ENCODE measurements at regions of chr10 and their contacts with region 1.

Region 1: GRCh38 chr10:120508393-120508792 is 51.4 kb downstream of the PLPP4 start:
- DNase-seq: peak; percentile 98
- H3K4me3 ChIP-seq: no peak overlapping the region
- H3K27ac ChIP-seq: peak overlapping the region; percentile 89
- H3K4me1 ChIP-seq: peaks cover 75% of the 10 kb centered on the region
- H3K27me3 ChIP-seq: no peaks in the 10 kb centered on the region
- CTCF ChIP-seq: no peak

Region 2: DNA sequence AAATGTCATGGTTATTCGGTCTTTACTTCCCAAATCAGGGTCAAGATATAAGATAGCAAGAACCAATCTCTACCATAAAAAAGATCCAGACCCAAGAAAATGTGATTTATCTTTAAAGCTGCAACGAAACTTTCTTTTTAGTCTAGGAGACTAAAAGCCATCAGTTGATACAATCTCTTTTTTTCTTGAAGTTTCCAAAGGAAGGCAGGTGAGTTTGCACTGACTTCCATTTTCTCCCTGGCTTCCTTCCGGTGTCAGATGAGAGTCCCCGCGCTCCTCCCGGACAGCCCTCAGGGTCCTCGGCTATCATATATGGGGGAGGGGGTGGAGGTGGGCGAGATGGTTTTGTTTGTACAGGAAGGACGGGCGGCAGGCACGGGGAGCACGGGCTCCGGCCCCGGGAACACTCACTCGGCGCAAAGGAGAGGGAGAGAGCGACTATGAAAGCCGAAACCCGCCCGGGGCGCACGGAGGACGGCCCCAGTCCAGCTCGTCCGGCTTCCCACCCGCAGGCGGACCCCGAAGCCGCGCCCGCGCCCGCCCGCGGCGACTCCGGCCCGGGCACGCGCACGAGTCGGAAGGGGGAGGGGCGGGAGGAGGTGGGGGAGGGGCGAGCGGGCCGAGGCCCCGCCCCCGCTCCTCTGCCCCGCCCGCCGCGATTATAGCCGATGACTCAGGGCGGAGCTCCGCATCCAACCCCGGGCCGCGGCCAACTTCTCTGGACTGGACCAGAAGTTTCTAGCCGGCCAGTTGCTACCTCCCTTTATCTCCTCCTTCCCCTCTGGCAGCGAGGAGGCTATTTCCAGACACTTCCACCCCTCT is 857.5 kb before region 1 on chr10 and contains the start of gene BAG3:
- CTCF ChIA-PET with region 1: no interaction called
- dilution Hi-C with region 1: no loop called
- in situ Hi-C with region 1: no loop called
- intact Hi-C with region 1: loop called (anchors 10 kb)
- DNase-seq: peak; percentile 92
- H3K4me3 ChIP-seq: peak within 1 kb of the TSS; percentile 95 to 97 (median 96)
- H3K27ac ChIP-seq: peak within 1 kb of the TSS; percentile 77
- H3K4me1 ChIP-seq: peaks cover 24% of the 10 kb centered on the region
- H3K27me3 ChIP-seq: no peaks in the 10 kb centered on the region
- CTCF ChIP-seq: no peak
- total RNA-seq, gene BAG3: 41.0 to 117 TPM

Region 3: GRCh38 chr10:119761106-119761505 is 747.3 kb before region 1 on chr10:
- CTCF ChIA-PET with region 1: no interaction called
- dilution Hi-C with region 1: no loop called
- in situ Hi-C with region 1: no loop called
- intact Hi-C with region 1: loop called (anchors 10 kb)
- DNase-seq: peak; percentile 81
- H3K4me3 ChIP-seq: peak overlapping the region in 1 of 3 experiments; percentile 9
- H3K27ac ChIP-seq: peak overlapping the region; percentile 26
- H3K4me1 ChIP-seq: peaks cover 13% of the 10 kb centered on the region
- H3K27me3 ChIP-seq: no peaks in the 10 kb centered on the region
- CTCF ChIP-seq: no peak

Region 4: DNA sequence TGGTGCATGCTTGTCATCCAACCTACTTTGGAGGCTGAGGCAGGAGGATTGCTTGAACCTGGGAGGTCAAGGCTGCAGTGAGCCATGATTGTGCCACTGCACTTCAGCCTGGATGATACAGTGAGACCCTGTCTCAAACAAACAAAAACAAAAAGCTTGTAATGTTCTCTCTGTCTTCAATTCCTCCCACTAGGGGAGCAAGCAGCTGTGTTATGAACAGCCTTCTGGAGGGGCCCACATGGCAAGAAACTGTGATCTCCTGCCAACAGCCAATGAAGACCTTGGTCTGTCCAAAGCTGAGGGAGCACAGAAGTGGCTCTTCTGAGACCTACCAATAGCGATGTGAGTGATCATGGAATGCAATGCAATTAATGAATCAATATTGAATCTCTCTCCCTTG is 386.6 kb before region 1 on chr10:
- CTCF ChIA-PET with region 1: no interaction called
- dilution Hi-C with region 1: no loop called
- in situ Hi-C with region 1: no loop called
- intact Hi-C with region 1: no loop called
- DNase-seq: no peak
- H3K4me3 ChIP-seq: no peak overlapping the region
- H3K27ac ChIP-seq: no peak overlapping the region
- H3K4me1 ChIP-seq: no peaks in the 10 kb centered on the region
- H3K27me3 ChIP-seq: peaks cover 5% of the 10 kb centered on the region
- CTCF ChIP-seq: no peak

Region 5: GRCh38 chr10:120456626-120457430 is 51.6 kb before region 1 on chr10 and contains the start of gene PLPP4:
- CTCF ChIA-PET with region 1: no interaction called
- dilution Hi-C with region 1: no loop called
- in situ Hi-C with region 1: no loop called
- intact Hi-C with region 1: loop called (anchors 1 kb)
- DNase-seq: peak; percentile 22
- H3K4me3 ChIP-seq: peak within 1 kb of the TSS; percentile 49 to 56 (median 49)
- H3K27ac ChIP-seq: no peak within 1 kb of the TSS
- H3K4me1 ChIP-seq: peaks cover 37% of the 10 kb centered on the region
- H3K27me3 ChIP-seq: peaks cover 15% of the 10 kb centered on the region
- CTCF ChIP-seq: no peak
- total RNA-seq, gene PLPP4: 0.35 to 10.3 TPM

Region 6: DNA sequence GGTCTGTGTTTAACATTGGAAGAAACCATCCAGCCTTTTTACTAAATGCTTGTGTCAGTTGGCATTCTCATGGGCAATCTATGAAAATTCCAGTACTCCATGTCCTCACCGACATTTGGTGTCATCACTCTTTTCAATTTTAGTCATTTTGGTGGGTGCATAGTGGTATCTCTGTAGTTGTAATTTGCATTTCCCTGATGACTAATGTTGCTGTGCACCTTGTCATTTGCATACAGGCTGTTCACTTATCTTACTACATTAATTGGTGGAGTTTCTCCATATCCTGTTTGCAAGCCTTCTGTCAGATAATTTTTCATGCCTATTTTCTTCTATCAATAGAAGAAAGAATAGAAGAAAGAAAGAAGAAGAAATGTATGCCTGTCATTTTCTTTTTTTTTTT is 22.3 kb after region 1 on chr10:
- CTCF ChIA-PET with region 1: no interaction called
- dilution Hi-C with region 1: no loop called
- in situ Hi-C with region 1: no loop called
- intact Hi-C with region 1: no loop called
- DNase-seq: no peak
- H3K4me3 ChIP-seq: no peak overlapping the region
- H3K27ac ChIP-seq: no peak overlapping the region
- H3K4me1 ChIP-seq: no peaks in the 10 kb centered on the region
- H3K27me3 ChIP-seq: no peaks in the 10 kb centered on the region
- CTCF ChIP-seq: no peak

Region 7: GRCh38 chr10:120850911-120851865 is 342.8 kb after region 1 on chr10 and contains the start of gene WDR11:
- CTCF ChIA-PET with region 1: no interaction called
- dilution Hi-C with region 1: no loop called
- in situ Hi-C with region 1: no loop called
- intact Hi-C with region 1: loop called (anchors 5 kb)
- DNase-seq: peak; percentile 92
- H3K4me3 ChIP-seq: peak within 1 kb of the TSS; percentile 68 to 84 (median 77)
- H3K27ac ChIP-seq: peak within 1 kb of the TSS; percentile 77
- H3K4me1 ChIP-seq: peaks cover 4% of the 10 kb centered on the region
- H3K27me3 ChIP-seq: no peaks in the 10 kb centered on the region
- CTCF ChIP-seq: no peak
- total RNA-seq, gene WDR11: 57.8 to 91.5 TPM